Activated T-helper 2 cell treated with anti-CD3 and anti-CD28 coated beads, Interferon-gamma antibody, Interleukin-2, Interleukin-4, amounts not matched to agents 10 μg/mL and 5 μg/mL and 100 μg/mL, durations not matched to agents 14 hours and 24 hours and 36 hours (primary cell): ENCODE measurements at regions of chr1 and their contacts with region 1.

Region 1: DNA sequence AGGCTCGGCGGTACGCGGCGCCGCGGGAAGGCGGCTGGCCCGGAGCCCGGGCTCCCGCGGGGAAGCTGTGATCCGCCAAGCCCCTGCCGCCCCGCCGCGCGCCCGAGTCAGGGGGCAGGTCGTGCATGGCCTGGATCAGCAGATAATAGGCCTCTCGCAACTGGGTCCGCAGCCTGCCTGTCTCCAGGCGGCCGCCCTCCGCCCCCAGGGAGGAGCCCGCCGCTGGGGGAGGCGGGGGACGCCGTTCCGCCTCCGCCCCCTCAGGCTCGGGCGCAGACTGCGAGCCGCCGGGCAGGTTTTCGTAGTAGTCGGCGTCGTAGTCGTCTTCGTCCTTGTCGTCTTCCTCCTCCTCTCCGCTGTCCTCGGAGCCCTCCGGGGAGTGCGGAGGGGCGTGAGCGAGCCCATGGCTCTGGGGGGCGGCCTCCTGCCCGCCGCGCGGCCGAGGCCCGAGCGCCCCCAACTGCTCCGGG is at the start of gene SYDE2:
- DNase-seq: peak; percentile 78
- H3K4me3 Mint-ChIP-seq: peak within 1 kb of the TSS; percentile 90
- H3K27ac Mint-ChIP-seq: peak within 1 kb of the TSS; percentile 88
- H3K4me1 Mint-ChIP-seq: peaks cover 19% of the 10 kb centered on the region
- H3K27me3 Mint-ChIP-seq: peaks cover 20% of the 10 kb centered on the region
- total RNA-seq, gene SYDE2: 1.9 and 2.1 TPM in 2 replicates

Region 2: DNA sequence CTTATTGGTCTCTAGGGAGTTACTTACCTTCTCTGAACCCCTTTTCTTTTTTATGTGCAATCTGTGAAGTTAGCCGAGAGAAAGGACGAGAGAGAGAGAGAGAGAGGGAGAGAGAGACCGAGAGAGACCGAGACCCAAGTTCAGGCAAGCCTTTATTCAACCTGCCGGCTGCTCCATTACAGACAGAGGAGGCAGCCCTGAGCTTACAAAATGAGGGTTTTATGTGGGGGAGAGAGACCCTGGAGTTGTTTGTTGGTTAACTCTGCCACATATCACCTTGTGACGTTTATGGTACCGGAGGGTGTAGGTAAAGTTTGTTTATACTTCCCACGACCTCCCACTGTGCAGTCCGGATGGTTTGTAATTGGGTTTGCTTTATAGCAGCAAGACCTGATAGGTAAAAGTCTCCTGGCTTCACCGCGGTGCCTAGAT is 151.2 kb before region 1 on chr1:
- intact Hi-C with region 1: loop called (anchors 1 kb)
- DNase-seq: no peak
- H3K4me3 Mint-ChIP-seq: peak overlapping the region; percentile 15
- H3K27ac Mint-ChIP-seq: no peak overlapping the region
- H3K4me1 Mint-ChIP-seq: peaks cover 24% of the 10 kb centered on the region
- H3K27me3 Mint-ChIP-seq: peaks cover 33% of the 10 kb centered on the region

Region 3: DNA sequence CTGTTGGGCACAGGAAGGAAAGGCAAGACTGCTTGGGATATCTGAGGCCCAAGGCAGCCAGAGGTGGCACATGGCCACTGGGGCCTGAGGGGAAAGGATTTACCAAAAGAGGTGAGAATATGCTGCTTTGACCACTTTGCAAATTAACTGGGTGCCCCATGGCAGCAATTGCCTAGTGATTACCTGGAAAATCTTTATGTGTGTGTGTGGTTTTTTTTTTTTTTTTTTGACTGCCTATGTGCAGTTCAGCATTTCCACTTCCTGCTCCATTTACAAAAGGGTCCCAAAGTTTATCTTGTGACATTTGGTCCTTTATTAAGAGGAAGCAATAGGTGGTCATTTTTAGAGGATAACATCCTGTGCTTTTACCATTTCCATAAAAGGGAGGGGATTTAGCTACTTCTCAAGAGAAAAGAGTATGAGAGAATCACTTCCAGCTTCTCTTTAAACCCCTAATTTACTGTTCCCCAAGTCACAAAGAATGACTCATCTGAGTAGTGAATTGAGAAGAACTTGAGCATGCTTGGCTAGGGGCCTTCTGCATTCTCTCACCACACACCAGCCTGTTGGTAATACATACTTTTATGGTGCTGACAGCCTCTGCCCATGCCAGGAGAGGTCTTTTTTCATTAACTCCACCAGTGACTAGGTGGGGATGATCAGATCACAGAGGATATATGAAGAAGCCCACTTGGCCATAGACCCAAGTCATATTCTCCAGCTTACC is 52.2 kb before region 1 on chr1:
- intact Hi-C with region 1: loop called (anchors 5 kb)
- DNase-seq: peak; percentile 12
- H3K4me3 Mint-ChIP-seq: no peak overlapping the region
- H3K27ac Mint-ChIP-seq: peak overlapping the region; percentile 67
- H3K4me1 Mint-ChIP-seq: peaks cover 39% of the 10 kb centered on the region
- H3K27me3 Mint-ChIP-seq: no peaks in the 10 kb centered on the region

Region 4: DNA sequence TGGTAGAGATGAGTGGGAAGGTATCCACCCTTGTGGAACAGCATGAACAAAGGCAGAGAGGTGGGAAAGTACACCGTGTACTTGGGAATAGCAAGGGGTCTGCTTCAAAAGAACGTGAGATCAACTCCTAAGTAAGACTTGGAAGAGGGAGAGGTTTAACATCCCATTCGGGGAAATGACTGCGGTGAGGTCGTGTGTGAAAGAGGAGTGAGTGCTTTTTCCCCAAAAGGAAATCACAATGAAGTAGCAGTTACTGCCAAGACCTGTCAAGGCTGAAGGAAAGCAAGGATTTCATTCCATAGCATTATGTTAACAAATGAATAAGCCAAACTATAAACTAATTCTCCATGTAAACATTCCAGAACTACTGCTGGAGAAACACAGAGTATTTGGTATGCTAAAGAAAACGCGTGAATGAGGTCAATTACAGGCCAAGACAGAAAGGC is 19.9 kb after region 1 on chr1:
- intact Hi-C with region 1: no loop called
- DNase-seq: no peak
- H3K4me3 Mint-ChIP-seq: no peak overlapping the region
- H3K27ac Mint-ChIP-seq: no peak overlapping the region
- H3K4me1 Mint-ChIP-seq: no peaks in the 10 kb centered on the region
- H3K27me3 Mint-ChIP-seq: peaks cover 42% of the 10 kb centered on the region

Region 5: GRCh38 chr1:85259118-85259911 is 58.4 kb after region 1 on chr1 and contains the start of gene C1orf52:
- intact Hi-C with region 1: loop called (anchors 2 kb)
- DNase-seq: peak; percentile 94
- H3K4me3 Mint-ChIP-seq: peak within 1 kb of the TSS; percentile 95
- H3K27ac Mint-ChIP-seq: peak within 1 kb of the TSS; percentile 89
- H3K4me1 Mint-ChIP-seq: peaks cover 23% of the 10 kb centered on the region
- H3K27me3 Mint-ChIP-seq: no peaks in the 10 kb centered on the region
- total RNA-seq, gene C1orf52: 23.9 and 25.8 TPM in 2 replicates

Region 6: GRCh38 chr1:86231076-86231475 is 1030.2 kb after region 1 on chr1:
- intact Hi-C with region 1: no loop called
- DNase-seq: no peak
- H3K4me3 Mint-ChIP-seq: no peak overlapping the region
- H3K27ac Mint-ChIP-seq: no peak overlapping the region
- H3K4me1 Mint-ChIP-seq: no peaks in the 10 kb centered on the region
- H3K27me3 Mint-ChIP-seq: no peaks in the 10 kb centered on the region